Heart left ventricle (tissue), 16 donors: ENCODE measurements at regions of chr9 and their contacts with region 1.

Region 1: GRCh38 chr9:70602321-70603019 is 188.0 kb upstream of the KLF9 start:
- DNase-seq: peak in 4 of 5 donors; percentile 50 to 62 (median 53)
- ATAC-seq: peak; percentile 51 to 63 (median 59)
- H3K4me3 ChIP-seq: peak overlapping the region in 8 of 12 donors; percentile 17 to 37 (median 20)
- H3K27ac ChIP-seq: peak overlapping the region; percentile 85 to 94 (median 90)
- H3K4me1 ChIP-seq: peaks cover 0 to 32% (median 25%) of the 10 kb centered on the region in 12 donors
- H3K27me3 ChIP-seq: no peaks in the 10 kb centered on the region
- CTCF ChIP-seq: peak; percentile 52 to 89 (median 80)
- POLR2A ChIP-seq: no peak

Region 2: DNA sequence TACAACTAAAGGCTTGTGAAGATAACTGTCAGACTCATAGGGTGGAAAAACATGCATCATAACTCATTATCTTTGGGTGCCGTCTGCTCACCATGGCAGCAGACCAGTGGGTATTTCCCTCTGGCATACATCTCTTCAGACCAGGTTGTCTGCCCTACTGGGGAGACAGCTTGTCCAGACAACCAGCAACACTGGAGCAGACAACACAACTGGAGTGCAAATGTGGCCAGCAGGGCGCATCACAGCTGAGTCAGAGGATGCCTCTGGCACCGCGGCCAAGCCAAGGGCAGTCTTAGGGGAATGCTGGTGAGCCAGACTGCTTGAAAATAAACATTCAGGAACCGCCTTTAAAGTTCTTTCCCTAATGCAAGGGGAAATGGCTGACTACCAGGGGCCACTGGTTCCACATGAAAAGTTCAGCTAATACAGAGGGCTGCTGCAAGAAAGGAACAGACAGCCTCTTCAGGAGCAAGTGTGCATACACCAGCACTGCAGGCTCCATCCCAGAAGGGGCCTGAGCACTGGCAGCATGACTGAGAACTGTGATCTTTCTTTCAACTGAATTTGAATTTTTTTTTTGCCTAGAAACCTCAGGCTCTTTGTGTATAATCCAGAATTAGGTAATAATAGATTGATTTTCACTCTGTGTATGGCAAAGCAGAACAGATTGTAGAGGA is 481.5 kb before region 1 on chr9:
- intact Hi-C with region 1: loop called in 1 of 10 experiments (anchors 5 kb)
- DNase-seq: peak in 4 of 5 donors; percentile 28 to 84 (median 78)
- ATAC-seq: peak; percentile 80 to 94 (median 88)
- H3K4me3 ChIP-seq: no peak overlapping the region
- H3K27ac ChIP-seq: peak overlapping the region in 5 of 12 donors; percentile 19 to 56 (median 31)
- H3K4me1 ChIP-seq: peaks cover 0 to 9% (median 0%) of the 10 kb centered on the region in 12 donors
- H3K27me3 ChIP-seq: no peaks in the 10 kb centered on the region
- CTCF ChIP-seq: peak in 5 of 12 donors; percentile 11 to 35 (median 26)
- POLR2A ChIP-seq: no peak

Region 3: GRCh38 chr9:70340572-70340971 is 261.9 kb before region 1 on chr9:
- intact Hi-C with region 1: loop called in 5 of 10 experiments (anchors 1 to 5 kb)
- DNase-seq: no peak
- ATAC-seq: no peak
- H3K4me3 ChIP-seq: no peak overlapping the region
- H3K27ac ChIP-seq: no peak overlapping the region
- H3K4me1 ChIP-seq: peaks cover 0 to 3% (median 0%) of the 10 kb centered on the region in 12 donors
- H3K27me3 ChIP-seq: no peaks in the 10 kb centered on the region
- CTCF ChIP-seq: peak; percentile 40 to 70 (median 60)
- POLR2A ChIP-seq: no peak

Region 4: DNA sequence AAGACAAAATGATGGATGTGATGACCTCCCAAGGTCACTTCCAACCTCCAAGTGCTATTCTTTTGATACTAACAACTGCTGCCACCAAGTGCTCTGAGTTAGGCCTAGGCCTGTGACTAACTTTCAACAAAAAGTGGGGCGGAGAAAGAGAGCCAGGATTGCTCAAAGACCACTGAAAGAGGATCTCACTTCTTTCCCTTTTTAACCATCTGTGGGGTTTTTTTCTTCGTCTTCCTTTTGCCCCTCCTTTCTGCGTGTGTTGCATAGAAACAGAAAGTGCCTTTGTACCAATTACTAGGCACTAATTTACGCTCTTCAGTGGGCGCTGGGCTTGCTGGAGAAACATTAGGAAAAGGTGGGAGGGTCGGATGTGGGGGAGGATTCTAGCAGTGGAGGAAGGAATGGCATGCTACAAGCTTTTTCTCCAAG is 196.0 kb before region 1 on chr9:
- intact Hi-C with region 1: loop called in 1 of 10 experiments (anchors 10 kb)
- DNase-seq: no peak
- ATAC-seq: peak in 1 of 4 donors; percentile 21
- H3K4me3 ChIP-seq: peak overlapping the region in 6 of 12 donors; percentile 8 to 35 (median 17)
- H3K27ac ChIP-seq: peak overlapping the region; percentile 45 to 86 (median 71)
- H3K4me1 ChIP-seq: peaks cover 21 to 96% (median 88%) of the 10 kb centered on the region in 12 donors
- H3K27me3 ChIP-seq: no peaks in the 10 kb centered on the region
- CTCF ChIP-seq: no peak
- POLR2A ChIP-seq: no peak

Region 5: GRCh38 chr9:70419546-70420266 is 182.8 kb before region 1 on chr9:
- intact Hi-C with region 1: loop called in 9 of 10 experiments (anchors 1 to 2 kb)
- DNase-seq: peak; percentile 96 to 98 (median 96)
- ATAC-seq: peak; percentile 51 to 76 (median 74)
- H3K4me3 ChIP-seq: peak overlapping the region; percentile 19 to 81 (median 58)
- H3K27ac ChIP-seq: peak overlapping the region; percentile 98 to 100 (median 100)
- H3K4me1 ChIP-seq: peaks cover 24 to 67% (median 53%) of the 10 kb centered on the region in 12 donors
- H3K27me3 ChIP-seq: no peaks in the 10 kb centered on the region
- CTCF ChIP-seq: peak in 2 of 12 donors; percentile 17 to 36
- POLR2A ChIP-seq: peak in 1 of 2 donors; percentile 77

Region 6: GRCh38 chr9:70840266-70840665 is 237.8 kb after region 1 on chr9:
- intact Hi-C with region 1: no loop called
- DNase-seq: no peak
- ATAC-seq: no peak
- H3K4me3 ChIP-seq: no peak overlapping the region
- H3K27ac ChIP-seq: no peak overlapping the region
- H3K4me1 ChIP-seq: no peaks in the 10 kb centered on the region
- H3K27me3 ChIP-seq: no peaks in the 10 kb centered on the region
- CTCF ChIP-seq: no peak
- POLR2A ChIP-seq: no peak